GM12878 (cell line): ENCODE measurements at regions of chr6 and their contacts with region 1.

Region 1: DNA sequence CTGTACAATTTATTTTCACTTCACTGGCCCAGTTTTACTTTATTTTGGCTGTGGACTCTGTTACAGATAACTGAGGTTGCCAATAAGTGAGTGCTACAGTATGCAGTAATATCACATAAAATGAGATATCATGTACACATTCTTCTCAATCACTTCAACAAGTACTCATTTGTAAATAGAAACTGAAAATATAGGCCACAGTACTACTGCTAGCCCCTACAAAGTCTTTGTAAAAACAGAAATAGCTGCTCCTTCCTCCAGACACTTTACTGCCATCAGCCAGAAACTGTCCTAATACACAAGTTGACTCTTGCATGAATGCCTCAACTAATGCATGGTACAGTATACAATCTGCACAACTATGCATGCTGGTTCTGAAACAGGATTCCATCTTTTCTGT is 9.2 kb downstream of the DTNBP1 start:
- DNase-seq: peak; percentile 36
- ATAC-seq: peak; percentile 74
- H3K4me3 ChIP-seq: no peak overlapping the region
- H3K27ac ChIP-seq: peak overlapping the region; percentile 1; the same call in 1 of the 2 replicates
- H3K4me1 ChIP-seq: peaks cover 23% of the 10 kb centered on the region
- H3K27me3 ChIP-seq: no peaks in the 10 kb centered on the region
- CTCF ChIP-seq: no peak
- EP300 ChIP-seq: no peak
- POLR2A ChIP-seq: no peak
- RAD21 ChIP-seq: no peak

Region 2: DNA sequence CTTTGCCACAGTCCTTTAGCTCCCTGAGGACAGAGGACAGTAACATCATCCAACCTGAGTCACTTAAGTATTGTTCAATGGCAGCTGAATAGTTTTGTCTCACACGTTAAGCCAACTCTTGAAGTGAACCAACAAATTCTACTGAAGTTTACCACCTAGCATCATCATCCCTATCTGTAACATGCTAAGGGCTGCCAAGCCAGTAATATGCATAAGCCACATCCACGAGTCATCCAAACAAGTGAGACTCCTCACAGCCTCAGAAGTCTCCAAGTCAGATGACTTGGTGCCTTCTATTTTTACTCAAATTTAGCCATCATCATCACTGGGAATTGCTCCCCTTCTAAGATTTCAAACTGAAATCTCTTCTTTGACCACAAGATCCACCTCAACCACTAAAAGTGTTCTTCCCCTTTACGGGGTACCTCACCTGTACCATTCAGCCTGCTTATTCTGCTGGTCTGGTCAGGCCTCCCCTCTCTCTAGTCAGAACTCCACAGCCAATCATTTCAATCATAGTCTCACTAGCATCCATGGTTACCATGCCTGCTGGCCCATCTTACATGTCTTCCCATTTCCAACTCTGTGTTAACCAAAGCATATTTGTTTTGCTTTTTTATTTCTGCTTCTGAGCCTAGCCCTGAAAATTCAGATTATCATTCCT is 64.5 kb before region 1 on chr6:
- CTCF ChIA-PET with region 1: interaction called, 3 read pairs
- POLR2A ChIA-PET with region 1: no interaction called
- RAD21 ChIA-PET with region 1: no interaction called
- SMC1A ChIA-PET with region 1: interaction called, 4 read pairs
- in situ Hi-C with region 1: no loop called
- intact Hi-C with region 1: loop called (anchors 2 kb)
- DNase-seq: no peak
- ATAC-seq: peak; percentile 38; the same call in 2 of the 3 replicates
- H3K4me3 ChIP-seq: no peak overlapping the region
- H3K27ac ChIP-seq: no peak overlapping the region
- H3K4me1 ChIP-seq: no peaks in the 10 kb centered on the region; the same call in 1 of the 2 replicates
- H3K27me3 ChIP-seq: no peaks in the 10 kb centered on the region
- CTCF ChIP-seq: no peak
- EP300 ChIP-seq: no peak
- POLR2A ChIP-seq: no peak
- RAD21 ChIP-seq: no peak

Region 3: GRCh38 chr6:15626878-15627674 is 26.5 kb before region 1 on chr6:
- CTCF ChIA-PET with region 1: interaction called, 26 read pairs
- POLR2A ChIA-PET with region 1: no interaction called
- RAD21 ChIA-PET with region 1: interaction called, 11 read pairs
- SMC1A ChIA-PET with region 1: interaction called, 48 read pairs
- in situ Hi-C with region 1: no loop called
- intact Hi-C with region 1: no loop called
- DNase-seq: no peak
- ATAC-seq: no peak
- H3K4me3 ChIP-seq: no peak overlapping the region
- H3K27ac ChIP-seq: no peak overlapping the region
- H3K4me1 ChIP-seq: peaks cover 1% of the 10 kb centered on the region; the same call in 1 of the 2 replicates
- H3K27me3 ChIP-seq: no peaks in the 10 kb centered on the region
- CTCF ChIP-seq: no peak
- EP300 ChIP-seq: no peak
- POLR2A ChIP-seq: no peak
- RAD21 ChIP-seq: no peak

Region 4: GRCh38 chr6:15643542-15643941 is 10.0 kb before region 1 on chr6:
- CTCF ChIA-PET with region 1: interaction called, 3 read pairs
- POLR2A ChIA-PET with region 1: interaction called, 3 read pairs
- RAD21 ChIA-PET with region 1: interaction called, 4 read pairs
- SMC1A ChIA-PET with region 1: interaction called, 11 read pairs
- in situ Hi-C with region 1: no loop called
- intact Hi-C with region 1: no loop called
- DNase-seq: no peak
- ATAC-seq: no peak
- H3K4me3 ChIP-seq: no peak overlapping the region
- H3K27ac ChIP-seq: no peak overlapping the region
- H3K4me1 ChIP-seq: no peaks in the 10 kb centered on the region
- H3K27me3 ChIP-seq: no peaks in the 10 kb centered on the region
- CTCF ChIP-seq: no peak
- EP300 ChIP-seq: no peak
- POLR2A ChIP-seq: no peak
- RAD21 ChIP-seq: no peak

Region 5: GRCh38 chr6:15715060-15715459 is 61.5 kb after region 1 on chr6:
- CTCF ChIA-PET with region 1: no interaction called
- POLR2A ChIA-PET with region 1: no interaction called
- RAD21 ChIA-PET with region 1: no interaction called
- SMC1A ChIA-PET with region 1: no interaction called
- in situ Hi-C with region 1: no loop called
- intact Hi-C with region 1: no loop called
- DNase-seq: no peak
- ATAC-seq: no peak
- H3K4me3 ChIP-seq: no peak overlapping the region
- H3K27ac ChIP-seq: no peak overlapping the region
- H3K4me1 ChIP-seq: no peaks in the 10 kb centered on the region
- H3K27me3 ChIP-seq: no peaks in the 10 kb centered on the region
- CTCF ChIP-seq: no peak
- EP300 ChIP-seq: no peak
- POLR2A ChIP-seq: no peak
- RAD21 ChIP-seq: no peak